Uterus (tissue), 4 donors: ENCODE measurements at regions of chr6 and their contacts with region 1.

Region 1: GRCh38 chr6:143427109-143427817 is 23.2 kb downstream of the ADAT2 start:
- DNase-seq: peak; percentile 32 to 65
- H3K4me3 ChIP-seq: no peak overlapping the region
- H3K27ac ChIP-seq: no peak overlapping the region
- H3K4me1 ChIP-seq: no peaks in the 10 kb centered on the region
- H3K27me3 ChIP-seq: no peaks in the 10 kb centered on the region
- CTCF ChIP-seq: peak; percentile 75 to 88 (median 77)
- POLR2A ChIP-seq: no peak

Region 2: DNA sequence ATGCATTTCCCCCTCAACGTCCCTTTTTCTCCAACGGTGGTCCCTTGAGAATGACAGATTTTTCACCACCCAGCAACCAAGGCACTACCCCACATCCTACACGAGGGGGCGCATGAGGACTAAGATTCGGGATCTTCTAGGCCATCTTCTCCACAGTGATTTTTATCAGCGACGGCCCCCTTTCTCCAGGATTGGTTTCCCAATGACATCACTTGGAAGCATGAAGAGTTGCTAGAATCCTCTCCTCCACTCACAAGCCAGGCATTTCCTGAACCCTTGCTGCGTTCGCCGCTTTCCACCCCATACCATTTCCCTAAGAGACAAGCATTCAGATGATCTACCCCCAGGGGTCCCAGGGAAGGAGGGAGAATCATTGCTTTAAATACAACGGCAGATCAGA is 734.3 kb before region 1 on chr6:
- intact Hi-C with region 1: loop called (anchors 5 kb)
- DNase-seq: peak; percentile 63 to 65
- H3K4me3 ChIP-seq: no peak overlapping the region
- H3K27ac ChIP-seq: no peak overlapping the region
- H3K4me1 ChIP-seq: peaks cover 0 to 4% of the 10 kb centered on the region in 2 donors
- H3K27me3 ChIP-seq: no peaks in the 10 kb centered on the region
- CTCF ChIP-seq: peak; percentile 85 to 92 (median 89)
- POLR2A ChIP-seq: no peak